Activated CD4-positive, alpha-beta T cell treated with anti-CD3 and anti-CD28 coated beads for 36 hours (primary cell): ENCODE measurements at regions of chr22 and their contacts with region 1.

Region 1: DNA sequence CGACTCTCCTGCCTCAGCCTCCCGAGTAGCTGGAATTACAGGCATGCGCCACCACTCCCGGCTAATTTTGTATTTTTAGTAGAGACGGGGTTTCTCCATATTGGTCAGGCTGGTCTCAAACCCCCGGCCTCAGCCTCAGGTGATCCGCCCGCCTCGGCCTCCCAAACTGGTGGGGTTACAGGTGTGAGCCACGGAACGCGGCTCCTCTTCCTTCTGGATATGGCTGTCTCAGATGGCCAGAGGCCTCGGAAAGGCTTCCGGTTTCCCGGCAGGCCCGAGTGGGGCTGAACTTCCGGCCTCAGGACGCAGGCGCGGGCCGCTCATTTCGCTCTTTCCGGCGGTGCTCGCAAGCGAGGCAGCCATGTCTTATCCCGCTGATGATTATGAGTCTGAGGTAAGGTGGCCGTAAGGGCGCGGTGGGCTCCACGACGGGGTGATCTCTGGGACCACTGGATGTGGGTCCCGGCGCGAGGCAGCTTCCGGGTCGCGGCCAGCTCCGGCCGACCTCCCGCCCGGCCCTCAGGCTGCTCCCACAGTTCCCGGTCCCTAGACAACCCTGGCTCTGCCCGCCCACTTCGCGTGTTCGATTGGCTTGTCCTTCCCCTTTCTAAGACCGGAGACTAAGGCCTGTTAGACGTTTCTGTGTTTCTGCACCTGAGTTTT is at the start of gene EIF3L:
- DNase-seq: peak; percentile 94
- ATAC-seq: peak; percentile 74
- H3K4me3 Mint-ChIP-seq: peak within 1 kb of the TSS; percentile 90
- H3K27ac Mint-ChIP-seq: peak within 1 kb of the TSS; percentile 96
- H3K4me1 Mint-ChIP-seq: peaks cover 47% of the 10 kb centered on the region
- H3K27me3 Mint-ChIP-seq: no peaks in the 10 kb centered on the region
- total RNA-seq, gene EIF3L: 632 to 670 TPM

Region 2: GRCh38 chr22:37658133-37659065 is 190.8 kb before region 1 on chr22 and contains the start of gene PDXP:
- CTCF ChIA-PET with region 1: interaction called, 3 read pairs
- POLR2A ChIA-PET with region 1: interaction called, 6 read pairs
- intact Hi-C with region 1: loop called in 1 of 2 experiments (anchors 1 kb)
- DNase-seq: peak; percentile 99
- ATAC-seq: peak; percentile 98
- H3K4me3 Mint-ChIP-seq: peak within 1 kb of the TSS; percentile 86
- H3K27ac Mint-ChIP-seq: peak within 1 kb of the TSS; percentile 91
- H3K4me1 Mint-ChIP-seq: peaks cover 31% of the 10 kb centered on the region
- H3K27me3 Mint-ChIP-seq: no peaks in the 10 kb centered on the region
- total RNA-seq, gene PDXP: 35.8 to 37.8 TPM

Region 3: DNA sequence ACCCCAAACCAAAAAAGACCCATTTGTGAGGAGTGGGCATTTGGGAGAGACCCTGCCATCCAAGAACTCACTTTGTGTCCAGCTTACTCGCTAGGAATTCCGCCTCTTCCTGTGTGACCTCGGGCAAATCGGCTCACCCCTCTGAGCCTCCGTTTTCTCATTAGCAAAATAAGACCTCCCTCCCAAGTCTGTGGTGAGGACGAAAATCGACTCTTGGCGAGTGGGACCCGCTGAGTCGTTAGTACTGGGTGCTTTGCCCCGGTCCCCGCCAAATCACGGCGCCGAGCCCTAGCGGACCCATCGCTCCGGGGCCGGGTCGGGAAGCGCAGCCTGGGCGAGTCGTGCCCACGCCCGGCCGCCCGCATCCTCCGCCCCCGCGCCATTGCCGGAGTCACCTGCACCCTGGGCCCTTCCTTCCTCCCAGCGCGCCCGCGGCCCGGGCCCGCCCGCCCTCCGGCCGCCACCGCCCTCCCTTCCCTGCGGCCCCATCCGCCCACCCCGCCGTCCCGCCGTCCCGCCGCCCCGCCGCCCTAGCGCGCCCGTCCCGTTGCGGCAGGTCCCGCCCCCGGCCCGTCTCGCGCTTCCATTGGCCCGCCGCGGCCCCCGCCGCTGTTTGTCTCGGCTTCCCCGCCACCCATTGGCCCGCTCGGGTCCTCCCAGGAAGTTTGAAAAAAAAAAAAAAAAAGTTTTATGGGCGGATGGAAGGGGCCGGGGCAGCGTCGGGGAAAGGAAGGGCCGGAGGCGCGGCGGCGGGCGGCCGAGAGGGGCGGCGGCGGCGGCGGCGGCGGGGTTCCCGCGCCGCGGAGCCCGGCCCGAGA is 103.5 kb before region 1 on chr22:
- CTCF ChIA-PET with region 1: no interaction called
- POLR2A ChIA-PET with region 1: no interaction called
- intact Hi-C with region 1: loop called in 1 of 2 experiments (anchors 1 kb)
- DNase-seq: peak; percentile 95
- ATAC-seq: peak; percentile 91
- H3K4me3 Mint-ChIP-seq: peak overlapping the region; percentile 84
- H3K27ac Mint-ChIP-seq: peak overlapping the region; percentile 90
- H3K4me1 Mint-ChIP-seq: peaks cover 25% of the 10 kb centered on the region
- H3K27me3 Mint-ChIP-seq: no peaks in the 10 kb centered on the region

Region 4: GRCh38 chr22:37862570-37863325 is 13.5 kb after region 1 on chr22:
- CTCF ChIA-PET with region 1: interaction called, 48 read pairs
- POLR2A ChIA-PET with region 1: interaction called, 4 read pairs
- intact Hi-C with region 1: loop called in 1 of 2 experiments (anchors 1 kb)
- DNase-seq: no peak
- ATAC-seq: peak; percentile 39
- H3K4me3 Mint-ChIP-seq: no peak overlapping the region
- H3K27ac Mint-ChIP-seq: peak overlapping the region; percentile 26
- H3K4me1 Mint-ChIP-seq: peaks cover 9% of the 10 kb centered on the region
- H3K27me3 Mint-ChIP-seq: no peaks in the 10 kb centered on the region

Region 5: GRCh38 chr22:38056969-38057891 is 208.0 kb after region 1 on chr22 and contains the start of gene PICK1:
- CTCF ChIA-PET with region 1: no interaction called
- POLR2A ChIA-PET with region 1: no interaction called
- intact Hi-C with region 1: loop called in 1 of 2 experiments (anchors 1 kb)
- DNase-seq: peak; percentile 92
- ATAC-seq: peak; percentile 93
- H3K4me3 Mint-ChIP-seq: peak within 1 kb of the TSS; percentile 88
- H3K27ac Mint-ChIP-seq: peak within 1 kb of the TSS; percentile 98
- H3K4me1 Mint-ChIP-seq: peaks cover 15% of the 10 kb centered on the region
- H3K27me3 Mint-ChIP-seq: no peaks in the 10 kb centered on the region
- total RNA-seq, gene PICK1: 14.9 to 17.2 TPM

Region 6: DNA sequence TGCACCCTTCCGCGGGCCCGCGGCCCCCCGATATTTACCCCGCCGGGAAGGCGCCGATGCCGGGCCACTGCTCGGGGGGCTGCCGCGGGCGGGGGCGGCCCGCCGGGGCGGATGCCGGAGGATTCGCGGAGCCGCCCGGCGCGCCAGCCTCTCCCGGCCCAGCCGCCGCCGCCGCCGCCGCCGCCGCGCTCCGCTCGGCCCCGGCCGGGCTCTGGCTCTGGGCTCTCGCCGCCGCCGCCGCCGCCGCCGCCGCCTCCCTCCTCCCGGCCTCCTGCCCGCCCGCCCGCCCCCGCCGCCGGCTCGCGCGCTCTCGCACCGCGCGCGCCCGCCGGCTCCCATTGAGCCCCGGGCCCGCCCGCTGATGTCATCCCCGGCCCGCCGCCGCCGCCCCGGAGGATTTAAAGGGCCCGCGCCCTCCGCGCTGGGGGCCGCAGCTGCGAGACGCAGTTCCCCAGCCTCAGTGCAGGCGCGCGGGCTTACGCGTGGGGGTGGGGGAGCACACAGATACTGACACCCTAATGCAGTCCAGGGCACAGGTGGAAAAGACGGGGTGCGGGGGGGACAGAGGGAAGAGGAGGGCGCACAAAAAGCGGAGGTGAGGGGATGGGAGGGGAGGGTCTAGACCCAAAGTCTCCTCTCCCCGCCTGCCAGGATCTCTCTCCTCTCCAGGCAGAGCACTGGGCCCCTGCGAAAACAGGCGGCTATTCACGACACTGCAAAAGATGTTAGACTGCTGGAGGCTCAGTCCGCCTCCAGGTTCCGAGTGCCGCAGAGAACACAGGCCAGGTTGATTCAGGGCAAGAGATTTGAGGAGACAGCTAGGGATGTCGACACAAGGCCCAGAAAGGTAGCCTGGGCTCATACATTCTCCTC is 468.1 kb after region 1 on chr22 and contains the start of gene CSNK1E:
- CTCF ChIA-PET with region 1: no interaction called
- POLR2A ChIA-PET with region 1: no interaction called
- intact Hi-C with region 1: loop called in 1 of 2 experiments (anchors 5 kb)
- DNase-seq: peak; percentile 84
- ATAC-seq: peak; percentile 63
- H3K4me3 Mint-ChIP-seq: peak within 1 kb of the TSS; percentile 90
- H3K27ac Mint-ChIP-seq: peak within 1 kb of the TSS; percentile 94
- H3K4me1 Mint-ChIP-seq: peaks cover 41% of the 10 kb centered on the region
- H3K27me3 Mint-ChIP-seq: no peaks in the 10 kb centered on the region
- total RNA-seq, gene CSNK1E: 117 to 145 TPM

Region 7: DNA sequence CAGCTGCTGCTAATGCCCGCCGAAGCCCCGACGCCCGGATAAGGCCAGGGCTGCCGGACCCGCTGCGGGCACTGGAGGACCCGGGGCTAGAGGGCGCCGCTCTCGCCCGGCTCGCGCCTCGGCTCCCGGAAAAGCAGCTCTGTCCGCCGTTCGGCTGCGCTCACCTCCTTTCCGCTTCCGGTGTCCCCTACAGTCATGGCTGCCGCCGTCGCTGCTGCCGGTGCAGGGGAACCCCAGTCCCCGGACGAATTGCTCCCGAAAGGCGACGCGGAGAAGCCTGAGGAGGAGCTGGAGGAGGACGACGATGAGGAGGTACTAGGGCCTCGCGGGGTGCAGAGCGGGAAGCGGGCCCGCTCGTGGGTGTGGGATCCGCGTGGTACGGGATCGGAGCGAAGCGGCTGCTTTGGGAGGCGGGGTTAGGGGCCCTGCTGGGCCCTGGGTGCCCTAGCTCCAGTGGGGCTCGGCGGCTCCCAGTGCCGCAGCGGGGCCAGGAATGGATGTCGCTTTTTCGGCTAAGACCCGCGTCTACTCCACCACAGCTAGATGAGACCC is 832.6 kb after region 1 on chr22 and contains the start of gene TOMM22:
- CTCF ChIA-PET with region 1: no interaction called
- POLR2A ChIA-PET with region 1: no interaction called
- intact Hi-C with region 1: loop called in 1 of 2 experiments (anchors 1 kb)
- DNase-seq: peak; percentile 92
- ATAC-seq: peak; percentile 98
- H3K4me3 Mint-ChIP-seq: peak within 1 kb of the TSS; percentile 90
- H3K27ac Mint-ChIP-seq: peak within 1 kb of the TSS; percentile 98
- H3K4me1 Mint-ChIP-seq: peaks cover 20% of the 10 kb centered on the region
- H3K27me3 Mint-ChIP-seq: no peaks in the 10 kb centered on the region
- total RNA-seq, gene TOMM22: 146 to 155 TPM